ENCODE measurements at regions of chr5 and their contacts with region 1.

Region 1: GRCh38 chr5:60699530-60700382 is at the start of gene DEPDC1B:
- DNase-seq: peak; percentile 94 to 95
- H3K4me3 ChIP-seq: peak within 1 kb of the TSS; percentile 72
- H3K4me3 Mint-ChIP-seq: peak within 1 kb of the TSS; percentile 74
- H3K27ac Mint-ChIP-seq: peak within 1 kb of the TSS; percentile 90
- H3K4me1 ChIP-seq: peaks cover 13% of the 10 kb centered on the region
- H3K4me1 Mint-ChIP-seq: peaks cover 10% of the 10 kb centered on the region
- H3K27me3 ChIP-seq: no peaks in the 10 kb centered on the region
- H3K27me3 Mint-ChIP-seq: no peaks in the 10 kb centered on the region
- CTCF ChIP-seq: peak; percentile 25 to 57
- total RNA-seq, gene DEPDC1B: 44.9 and 46.7 TPM in 2 replicates

Region 2: GRCh38 chr5:60633341-60633740 is 66.4 kb before region 1 on chr5:
- CTCF ChIA-PET with region 1: no interaction called
- POLR2A ChIA-PET with region 1: no interaction called
- intact Hi-C with region 1: no loop called
- DNase-seq: no peak
- H3K4me3 ChIP-seq: no peak overlapping the region
- H3K4me3 Mint-ChIP-seq: no peak overlapping the region
- H3K27ac Mint-ChIP-seq: no peak overlapping the region
- H3K4me1 ChIP-seq: no peaks in the 10 kb centered on the region
- H3K4me1 Mint-ChIP-seq: no peaks in the 10 kb centered on the region
- H3K27me3 ChIP-seq: no peaks in the 10 kb centered on the region
- H3K27me3 Mint-ChIP-seq: no peaks in the 10 kb centered on the region
- CTCF ChIP-seq: no peak

Region 3: GRCh38 chr5:60687927-60688720 is 11.6 kb before region 1 on chr5:
- CTCF ChIA-PET with region 1: interaction called, 47 read pairs
- POLR2A ChIA-PET with region 1: interaction called, 33 read pairs
- intact Hi-C with region 1: loop called (anchors 1 kb)
- DNase-seq: peak; percentile 65 to 67
- H3K4me3 ChIP-seq: no peak overlapping the region
- H3K4me3 Mint-ChIP-seq: no peak overlapping the region
- H3K27ac Mint-ChIP-seq: peak overlapping the region; percentile 53
- H3K4me1 ChIP-seq: peaks cover 36% of the 10 kb centered on the region
- H3K4me1 Mint-ChIP-seq: peaks cover 47% of the 10 kb centered on the region
- H3K27me3 ChIP-seq: no peaks in the 10 kb centered on the region
- H3K27me3 Mint-ChIP-seq: no peaks in the 10 kb centered on the region
- CTCF ChIP-seq: peak; percentile 41 to 57

Region 4: GRCh38 chr5:60710373-60710772 is 10.6 kb after region 1 on chr5:
- CTCF ChIA-PET with region 1: interaction called, 13 read pairs
- POLR2A ChIA-PET with region 1: interaction called, 4 read pairs
- intact Hi-C with region 1: no loop called
- DNase-seq: no peak
- H3K4me3 ChIP-seq: no peak overlapping the region
- H3K4me3 Mint-ChIP-seq: no peak overlapping the region
- H3K27ac Mint-ChIP-seq: no peak overlapping the region
- H3K4me1 ChIP-seq: no peaks in the 10 kb centered on the region
- H3K4me1 Mint-ChIP-seq: no peaks in the 10 kb centered on the region
- H3K27me3 ChIP-seq: no peaks in the 10 kb centered on the region
- H3K27me3 Mint-ChIP-seq: no peaks in the 10 kb centered on the region
- CTCF ChIP-seq: peak in 1 of 2 experiments; percentile 11

Region 5: DNA sequence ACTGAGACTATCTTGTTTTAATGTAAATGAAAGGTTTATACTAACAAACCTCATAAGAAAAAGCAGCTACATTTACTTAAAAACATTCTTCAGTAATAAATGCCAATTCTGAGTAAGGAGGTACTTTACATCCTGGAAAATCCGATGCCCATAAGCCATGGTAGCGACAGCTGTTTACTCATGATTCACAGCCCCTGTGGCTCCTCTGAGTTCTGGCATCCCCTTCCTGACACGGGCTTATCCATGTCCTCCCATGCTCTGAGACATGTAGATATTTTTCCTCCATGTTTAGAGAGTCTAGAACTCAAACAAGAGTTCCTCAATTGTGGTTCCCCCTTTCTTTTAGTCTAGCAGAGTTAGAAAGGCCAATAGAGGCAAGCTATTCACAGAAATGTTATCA is 63.3 kb after region 1 on chr5:
- CTCF ChIA-PET with region 1: no interaction called
- POLR2A ChIA-PET with region 1: interaction called, 12 read pairs
- intact Hi-C with region 1: no loop called
- DNase-seq: no peak
- H3K4me3 ChIP-seq: no peak overlapping the region
- H3K4me3 Mint-ChIP-seq: no peak overlapping the region
- H3K27ac Mint-ChIP-seq: no peak overlapping the region
- H3K4me1 ChIP-seq: peaks cover 15% of the 10 kb centered on the region
- H3K4me1 Mint-ChIP-seq: peaks cover 25% of the 10 kb centered on the region
- H3K27me3 ChIP-seq: no peaks in the 10 kb centered on the region
- H3K27me3 Mint-ChIP-seq: no peaks in the 10 kb centered on the region
- CTCF ChIP-seq: no peak

Region 6: GRCh38 chr5:60843936-60844905 is 144.5 kb after region 1 on chr5 and contains the start of gene ELOVL7:
- CTCF ChIA-PET with region 1: interaction called, 8 read pairs
- POLR2A ChIA-PET with region 1: interaction called, 23 read pairs
- intact Hi-C with region 1: no loop called
- DNase-seq: peak; percentile 92 to 96
- H3K4me3 ChIP-seq: peak within 1 kb of the TSS; percentile 97
- H3K4me3 Mint-ChIP-seq: peak within 1 kb of the TSS; percentile 96
- H3K27ac Mint-ChIP-seq: peak within 1 kb of the TSS; percentile 86
- H3K4me1 ChIP-seq: peaks cover 4% of the 10 kb centered on the region; the same call in 1 of the 2 replicates
- H3K4me1 Mint-ChIP-seq: peaks cover 31% of the 10 kb centered on the region
- H3K27me3 ChIP-seq: 0 out of 2 replicates have a peak, but pooled peaks cover 2% of the 10 kb centered on the region
- H3K27me3 Mint-ChIP-seq: no peaks in the 10 kb centered on the region
- CTCF ChIP-seq: peak; percentile 36 to 56
- total RNA-seq, gene ELOVL7: 16.4 and 19.1 TPM in 2 replicates

Region 7: DNA sequence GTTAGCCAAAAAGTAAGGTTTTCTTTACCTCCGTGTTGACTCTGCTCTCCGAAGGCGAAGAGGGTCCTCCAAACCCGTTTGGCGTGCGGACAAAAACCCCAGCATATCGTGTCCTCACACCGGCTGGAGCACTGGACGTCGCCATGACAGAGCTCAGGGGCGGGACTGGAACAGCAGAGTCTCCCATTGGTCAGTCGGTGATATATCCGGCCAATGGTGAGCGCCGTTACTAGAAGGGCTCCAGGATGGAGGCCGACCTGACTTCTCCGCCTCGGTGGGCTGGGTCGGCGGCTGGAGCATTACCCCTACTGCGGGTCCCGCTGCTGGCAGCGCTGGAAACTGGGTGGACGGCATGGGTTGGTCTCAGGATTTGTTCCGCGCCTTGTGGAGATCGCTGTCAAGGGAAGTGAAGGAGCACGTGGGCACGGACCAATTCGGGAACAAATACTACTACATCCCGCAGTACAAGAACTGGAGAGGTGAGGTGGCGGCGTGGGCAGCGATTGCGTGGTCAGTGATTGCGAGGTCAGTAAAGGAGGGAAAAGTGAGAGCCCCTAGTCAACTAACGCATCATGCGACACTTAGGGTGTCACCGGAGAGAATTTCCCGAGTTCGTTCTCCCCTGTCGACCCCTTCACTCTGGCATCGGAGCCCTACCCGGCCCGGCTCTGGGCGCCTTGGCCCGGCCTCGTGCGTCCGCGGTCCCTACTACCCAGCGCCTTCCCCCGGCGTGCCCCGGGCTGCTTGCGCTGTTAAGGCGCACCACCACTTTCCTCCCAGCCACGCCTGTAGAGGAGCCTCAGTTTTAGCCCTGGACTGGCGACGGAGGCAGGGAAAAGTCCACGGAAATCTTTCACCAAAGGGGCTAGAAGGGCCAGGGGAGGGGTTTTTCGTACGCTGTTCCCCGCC is 245.4 kb after region 1 on chr5 and contains the starts of genes ERCC8 and NDUFAF2:
- CTCF ChIA-PET with region 1: interaction called, 7 read pairs
- POLR2A ChIA-PET with region 1: interaction called, 14 read pairs
- intact Hi-C with region 1: no loop called
- DNase-seq: peak; percentile 93 to 94
- H3K4me3 ChIP-seq: peak within 1 kb of the TSS; percentile 42
- H3K4me3 Mint-ChIP-seq: no peak within 1 kb of the TSS
- H3K27ac Mint-ChIP-seq: no peak within 1 kb of the TSS
- H3K4me1 ChIP-seq: peaks cover 6% of the 10 kb centered on the region; the same call in 1 of the 2 replicates
- H3K4me1 Mint-ChIP-seq: no peaks in the 10 kb centered on the region
- H3K27me3 ChIP-seq: no peaks in the 10 kb centered on the region
- H3K27me3 Mint-ChIP-seq: no peaks in the 10 kb centered on the region
- CTCF ChIP-seq: no peak
- total RNA-seq, gene ERCC8: 18.3 and 19.8 TPM in 2 replicates
- total RNA-seq, gene NDUFAF2: 57.9 and 60.8 TPM in 2 replicates